Caco-2 (cell line): ENCODE measurements at regions of chr4 and their contacts with region 1.

Region 1: DNA sequence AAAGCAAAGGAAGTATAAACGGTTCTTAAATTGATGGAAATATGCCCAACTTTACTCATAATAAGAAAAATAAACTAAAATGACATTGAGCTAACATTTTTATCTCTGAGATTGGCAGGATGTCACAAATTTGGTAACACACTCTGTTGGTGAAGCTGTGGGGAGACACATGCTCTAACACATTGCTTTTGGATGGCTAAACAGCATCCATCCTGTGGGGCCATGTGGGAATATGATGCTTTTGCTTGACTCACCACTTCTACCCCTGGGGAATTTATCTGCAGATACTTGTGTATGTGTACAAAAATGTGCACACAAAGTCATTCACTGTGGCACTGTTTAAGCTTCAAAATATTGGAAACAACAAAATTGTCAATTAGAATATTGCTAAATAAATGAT is 100.2 kb downstream of the ANAPC4 start:
- DNase-seq: no peak
- H3K4me3 ChIP-seq: no peak overlapping the region
- H3K4me3 Mint-ChIP-seq: no peak overlapping the region
- H3K27ac Mint-ChIP-seq: no peak overlapping the region
- H3K4me1 ChIP-seq: no peaks in the 10 kb centered on the region
- H3K4me1 Mint-ChIP-seq: no peaks in the 10 kb centered on the region
- H3K27me3 ChIP-seq: no peaks in the 10 kb centered on the region; the same call in 1 of the 2 replicates
- H3K27me3 Mint-ChIP-seq: no peaks in the 10 kb centered on the region
- CTCF ChIP-seq: no peak

Region 2: DNA sequence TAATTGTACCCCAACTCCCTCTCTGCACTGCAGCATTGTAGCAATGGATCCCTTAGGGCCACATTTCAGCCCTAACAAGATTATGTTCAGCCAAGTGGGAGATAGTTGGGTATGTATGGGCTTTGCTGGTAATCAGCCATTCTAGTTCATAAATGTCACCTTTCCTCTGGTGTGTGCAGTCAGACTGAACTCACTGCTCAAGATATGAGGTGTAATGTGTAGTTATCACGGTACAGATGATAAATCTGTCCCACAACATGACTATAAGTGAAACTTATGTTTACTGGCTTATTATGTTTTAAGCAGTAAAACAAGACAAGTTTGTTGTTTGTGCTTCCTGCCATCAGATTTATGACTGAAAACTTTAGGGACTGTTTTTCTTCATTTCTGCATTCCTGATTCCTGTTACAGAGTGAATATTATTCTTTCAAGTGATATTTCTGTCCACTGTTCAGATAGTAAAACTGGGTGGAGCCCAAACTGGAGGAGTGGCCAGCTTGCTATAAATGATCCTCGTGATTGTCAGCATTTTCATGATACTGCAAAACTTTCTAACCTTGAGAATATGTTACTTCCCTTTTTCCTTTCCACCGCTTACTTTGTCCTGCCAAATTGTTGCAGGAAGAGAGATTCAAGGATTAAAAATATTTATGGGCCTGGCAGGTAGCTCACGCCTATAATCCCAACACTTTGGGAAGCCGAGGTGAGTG is 55.2 kb before region 1 on chr4:
- CTCF ChIA-PET with region 1: interaction called, 16 read pairs
- POLR2A ChIA-PET with region 1: no interaction called
- intact Hi-C with region 1: no loop called
- DNase-seq: no peak
- H3K4me3 ChIP-seq: no peak overlapping the region
- H3K4me3 Mint-ChIP-seq: no peak overlapping the region
- H3K27ac Mint-ChIP-seq: no peak overlapping the region
- H3K4me1 ChIP-seq: no peaks in the 10 kb centered on the region
- H3K4me1 Mint-ChIP-seq: no peaks in the 10 kb centered on the region
- H3K27me3 ChIP-seq: no peaks in the 10 kb centered on the region
- H3K27me3 Mint-ChIP-seq: no peaks in the 10 kb centered on the region
- CTCF ChIP-seq: no peak

Region 3: DNA sequence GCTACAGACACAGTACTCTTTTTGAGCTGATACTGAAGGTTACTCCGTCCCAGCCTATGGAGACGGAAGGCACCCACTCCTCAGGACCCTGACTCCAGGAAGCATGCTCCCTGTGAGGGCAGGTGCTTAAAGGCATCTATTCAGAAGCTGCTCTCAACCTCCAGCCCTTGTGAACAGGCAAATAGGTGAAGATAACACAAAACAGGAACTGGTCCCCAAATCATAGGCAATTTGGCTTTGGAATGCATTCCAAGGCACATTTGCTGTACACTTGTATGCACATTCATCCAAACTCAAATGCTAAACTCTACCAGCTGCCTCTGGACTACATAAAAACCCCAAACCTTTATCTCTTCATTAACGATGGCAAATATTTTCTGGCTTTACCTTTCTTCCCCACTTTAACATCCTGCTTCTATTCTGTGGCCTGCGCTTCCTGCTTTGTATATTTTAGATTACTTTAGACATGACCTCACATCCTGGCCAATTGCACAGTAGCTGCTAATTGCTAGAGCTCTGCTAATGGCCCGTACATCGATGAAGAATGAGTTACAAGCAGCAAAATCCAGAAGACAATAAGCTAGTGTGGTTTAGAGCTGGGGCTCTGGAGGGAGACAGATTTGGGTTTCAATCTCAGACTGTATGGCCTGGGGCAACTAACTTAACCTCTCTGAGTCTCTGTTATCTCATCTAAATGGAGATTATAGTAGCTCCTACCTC is 382.4 kb after region 1 on chr4:
- CTCF ChIA-PET with region 1: no interaction called
- POLR2A ChIA-PET with region 1: no interaction called
- intact Hi-C with region 1: no loop called
- DNase-seq: no peak
- H3K4me3 ChIP-seq: no peak overlapping the region
- H3K4me3 Mint-ChIP-seq: no peak overlapping the region
- H3K27ac Mint-ChIP-seq: no peak overlapping the region
- H3K4me1 ChIP-seq: peaks cover 9% of the 10 kb centered on the region; the same call in 1 of the 2 replicates
- H3K4me1 Mint-ChIP-seq: peaks cover 12% of the 10 kb centered on the region
- H3K27me3 ChIP-seq: no peaks in the 10 kb centered on the region
- H3K27me3 Mint-ChIP-seq: no peaks in the 10 kb centered on the region
- CTCF ChIP-seq: no peak